SK-N-SH (cell line): ENCODE measurements at regions of chr12 and their contacts with region 1.

Region 1: GRCh38 chr12:2751686-2752085 is 43.1 kb upstream of the FKBP4 start:
- DNase-seq: peak; percentile 32
- H3K4me3 ChIP-seq: no peak overlapping the region
- H3K27ac ChIP-seq: no peak overlapping the region
- H3K4me1 ChIP-seq: peaks cover 0 to 3% of the 10 kb centered on the region in 2 experiments; a peak in 2 of 4 replicates
- H3K27me3 ChIP-seq: no peaks in the 10 kb centered on the region; the same call in 1 of the 2 replicates
- CTCF ChIP-seq: no peak
- EP300 ChIP-seq: no peak
- RAD21 ChIP-seq: no peak

Region 2: DNA sequence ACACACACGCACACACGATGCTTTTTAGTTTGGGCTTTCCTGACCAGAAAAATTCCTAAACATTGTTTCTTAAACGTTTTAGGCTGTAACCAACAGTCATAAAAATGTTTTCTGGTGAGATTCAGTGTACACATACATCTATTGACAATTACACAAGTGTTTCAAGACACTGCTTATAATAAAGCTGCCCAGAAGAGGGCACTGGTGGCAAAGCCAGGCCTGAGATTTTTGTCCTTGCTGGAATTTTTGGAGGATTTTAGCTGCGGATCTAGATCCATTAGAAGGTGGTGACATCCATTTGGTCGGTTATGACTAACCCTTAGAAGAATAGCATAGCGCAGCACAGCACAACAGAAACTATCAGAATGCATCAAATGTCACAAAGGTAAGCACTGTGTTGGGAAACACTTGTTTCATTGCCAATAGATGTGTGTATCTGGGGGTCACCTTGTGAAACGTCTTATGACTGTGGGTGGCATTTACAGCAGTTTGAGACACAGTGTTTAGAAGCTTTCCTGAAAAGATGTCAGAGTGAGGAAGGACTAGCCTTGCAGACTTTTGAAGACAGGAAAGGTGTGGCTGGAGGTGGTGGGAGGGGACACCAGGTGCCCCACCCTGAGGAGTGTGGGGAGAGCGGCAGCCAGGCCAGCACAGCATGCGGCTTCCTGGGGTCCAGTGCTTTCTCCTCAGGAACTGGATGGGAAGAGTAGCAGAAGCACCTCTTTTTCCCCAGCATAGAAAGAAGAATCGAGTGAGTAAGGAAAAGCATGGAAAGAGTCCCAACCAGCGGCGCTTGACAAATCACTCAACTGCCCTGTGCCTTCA is 11.7 kb before region 1 on chr12:
- CTCF ChIA-PET with region 1: interaction called, 26 read pairs
- POLR2A ChIA-PET with region 1: no interaction called
- DNase-seq: peak; percentile 46
- H3K4me3 ChIP-seq: no peak overlapping the region
- H3K27ac ChIP-seq: no peak overlapping the region
- H3K4me1 ChIP-seq: no peaks in the 10 kb centered on the region
- H3K27me3 ChIP-seq: peaks cover 22% of the 10 kb centered on the region
- CTCF ChIP-seq: peak; percentile 73
- EP300 ChIP-seq: no peak
- RAD21 ChIP-seq: peak; percentile 86

Region 3: GRCh38 chr12:2769871-2770533 is 18.3 kb after region 1 on chr12:
- CTCF ChIA-PET with region 1: no interaction called
- POLR2A ChIA-PET with region 1: no interaction called
- DNase-seq: no peak
- H3K4me3 ChIP-seq: no peak overlapping the region
- H3K27ac ChIP-seq: no peak overlapping the region
- H3K4me1 ChIP-seq: no peaks in the 10 kb centered on the region
- H3K27me3 ChIP-seq: peaks cover 5% of the 10 kb centered on the region; the same call in 1 of the 2 replicates
- CTCF ChIP-seq: no peak
- EP300 ChIP-seq: no peak
- RAD21 ChIP-seq: no peak